CD14-positive monocyte (primary cell): ENCODE measurements at regions of chr4 and their contacts with region 1.

Region 1: DNA sequence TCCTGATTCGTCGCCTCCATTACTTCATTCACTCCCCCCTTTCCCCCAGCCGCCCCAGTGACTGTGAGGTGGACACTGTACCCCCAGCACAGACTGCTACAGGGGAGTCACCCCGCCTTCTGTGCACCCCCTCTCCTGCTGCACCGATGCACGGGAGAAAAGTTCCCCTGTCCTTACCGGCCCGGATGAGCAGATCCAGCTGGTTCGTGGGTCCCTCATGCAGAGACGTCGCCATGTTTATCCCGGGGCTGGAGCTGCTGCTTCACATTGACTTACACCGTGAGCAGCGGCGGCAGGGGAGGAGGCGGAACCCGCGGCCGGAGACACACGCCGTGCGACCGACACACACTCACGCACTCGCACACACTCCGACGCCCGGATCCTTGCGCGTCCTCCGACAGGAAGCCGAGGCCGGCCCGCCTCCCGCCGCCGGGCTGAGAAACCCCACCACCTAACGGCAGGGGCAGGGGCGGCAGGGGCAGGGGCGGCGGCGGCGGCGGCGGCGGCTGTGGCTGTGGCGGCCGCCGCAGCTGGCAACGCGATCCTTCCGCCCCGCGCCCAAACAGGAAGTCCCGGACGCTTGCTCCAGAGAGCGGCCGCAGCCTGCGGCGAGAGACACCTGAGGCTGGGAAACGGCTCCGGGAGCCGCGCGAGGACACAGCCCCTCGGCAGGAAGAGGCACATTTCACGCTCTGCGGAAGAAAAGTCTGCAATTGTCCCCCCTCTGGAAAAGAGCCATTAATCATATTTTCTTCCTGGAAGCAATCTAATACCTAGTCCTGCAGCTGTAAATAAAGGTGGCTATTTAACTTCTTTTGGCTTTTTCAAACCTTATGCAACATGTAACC is 68.6 kb downstream of the NOCT start:
- DNase-seq: peak; percentile 70 to 82 (median 81)
- H3K4me3 ChIP-seq: peak overlapping the region; percentile 69 to 98 (median 84)
- H3K4me3 Mint-ChIP-seq: peak overlapping the region; percentile 98 to 99
- H3K27ac ChIP-seq: peak overlapping the region; percentile 91 to 92
- H3K27ac Mint-ChIP-seq: peak overlapping the region; percentile 96 to 99 (median 99)
- H3K4me1 ChIP-seq: peaks cover 17 to 26% of the 10 kb centered on the region in 2 donors
- H3K4me1 Mint-ChIP-seq: peaks cover 28% of the 10 kb centered on the region
- H3K27me3 ChIP-seq: no peaks in the 10 kb centered on the region
- H3K27me3 Mint-ChIP-seq: peaks cover 0 to 2% (median 1%) of the 10 kb centered on the region in 3 donors
- CTCF ChIP-seq: no peak

Region 2: GRCh38 chr4:138512756-138513155 is 571.4 kb before region 1 on chr4:
- intact Hi-C with region 1: no loop called
- DNase-seq: no peak
- H3K4me3 ChIP-seq: no peak overlapping the region
- H3K4me3 Mint-ChIP-seq: no peak overlapping the region
- H3K27ac ChIP-seq: no peak overlapping the region
- H3K27ac Mint-ChIP-seq: no peak overlapping the region
- H3K4me1 ChIP-seq: no peaks in the 10 kb centered on the region
- H3K4me1 Mint-ChIP-seq: no peaks in the 10 kb centered on the region
- H3K27me3 ChIP-seq: peaks cover 0 to 7% of the 10 kb centered on the region in 2 donors
- H3K27me3 Mint-ChIP-seq: peaks cover 2 to 13% (median 6%) of the 10 kb centered on the region in 3 donors
- CTCF ChIP-seq: no peak

Region 3: DNA sequence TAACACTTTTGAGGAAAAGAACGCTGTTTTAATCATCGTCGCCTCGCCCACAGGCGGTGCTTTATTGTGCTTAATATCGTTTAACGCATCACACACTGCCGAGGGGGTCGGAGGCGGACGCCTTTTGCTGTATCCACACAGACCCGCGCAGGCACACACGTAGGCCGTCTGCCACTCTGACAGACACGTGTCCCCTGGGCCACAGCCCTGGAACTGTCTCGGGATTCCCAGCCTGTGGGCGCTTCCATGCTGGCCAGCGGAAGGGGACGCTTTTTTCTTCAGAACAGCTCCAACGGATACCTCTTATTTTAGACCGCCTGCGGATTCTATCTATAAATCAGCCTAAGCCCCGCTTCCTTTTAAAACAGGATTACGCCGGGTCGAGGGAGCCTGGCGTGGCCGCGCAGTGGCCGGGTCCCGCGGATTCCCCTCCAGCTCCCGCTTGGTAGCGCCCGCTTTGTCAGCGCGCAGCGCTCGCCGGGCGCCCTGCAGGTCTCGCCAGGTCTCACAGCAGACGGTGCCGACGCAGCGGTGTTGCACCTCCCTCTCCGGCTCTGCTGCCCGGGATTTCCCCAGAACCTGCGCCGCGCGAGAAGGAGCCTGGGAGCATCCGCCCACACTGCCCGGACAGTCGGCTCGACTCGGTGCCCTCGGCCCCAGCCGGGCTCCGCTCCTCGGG is 68.8 kb before region 1 on chr4 and contains the start of gene NOCT:
- intact Hi-C with region 1: loop called (anchors 5 kb)
- DNase-seq: peak; percentile 88 to 95 (median 91)
- H3K4me3 ChIP-seq: peak within 1 kb of the TSS; percentile 67 to 86 (median 86)
- H3K4me3 Mint-ChIP-seq: peak within 1 kb of the TSS; percentile 95
- H3K27ac ChIP-seq: peak within 1 kb of the TSS; percentile 83 to 92
- H3K27ac Mint-ChIP-seq: peak within 1 kb of the TSS; percentile 98 to 99 (median 99)
- H3K4me1 ChIP-seq: peaks cover 48 to 63% of the 10 kb centered on the region in 2 donors
- H3K4me1 Mint-ChIP-seq: peaks cover 52% of the 10 kb centered on the region
- H3K27me3 ChIP-seq: no peaks in the 10 kb centered on the region
- H3K27me3 Mint-ChIP-seq: peaks cover 0 to 3% (median 0%) of the 10 kb centered on the region in 3 donors
- CTCF ChIP-seq: peak; percentile 13
- polyA plus RNA-seq, gene NOCT: 0.54 to 31.5 (median 0.89) TPM

Region 4: DNA sequence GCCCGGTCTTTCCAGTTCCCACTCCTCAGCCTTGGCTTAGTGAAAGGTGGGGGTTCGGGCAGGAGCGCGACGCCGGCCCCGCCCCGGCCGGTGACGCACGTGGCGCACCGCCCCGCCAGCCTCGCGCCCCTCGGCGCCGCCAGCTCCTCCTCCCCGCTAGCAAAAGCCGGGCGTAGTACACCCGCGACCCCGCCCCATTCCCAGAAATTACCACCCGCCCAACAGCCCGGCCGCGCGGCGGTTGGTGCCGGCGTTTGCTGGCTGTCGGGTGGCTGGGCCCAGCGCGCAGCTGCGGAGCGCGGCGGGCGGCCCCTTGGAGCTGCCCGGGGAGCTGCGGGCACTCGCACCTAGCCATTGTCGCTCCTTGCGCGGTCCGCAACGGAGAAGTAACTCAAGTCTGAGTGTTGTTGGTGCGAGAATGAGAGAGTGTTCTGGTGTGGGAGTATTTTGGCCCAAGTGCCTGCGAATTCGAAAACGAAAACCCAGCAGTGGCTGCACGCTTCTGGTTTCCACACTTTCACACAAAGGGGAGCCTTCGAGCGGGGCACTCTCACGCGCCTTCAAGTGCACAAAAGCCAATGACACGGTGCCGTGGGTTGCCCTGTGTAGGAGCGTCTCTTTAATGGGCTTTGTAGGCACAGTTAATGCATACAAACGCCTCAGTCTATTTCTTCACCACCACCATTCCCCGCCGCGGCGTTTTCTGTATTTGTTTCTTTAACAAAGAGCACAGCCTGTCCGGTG is 93.9 kb after region 1 on chr4:
- intact Hi-C with region 1: loop called in 1 of 2 experiments (anchors 10 kb)
- DNase-seq: peak; percentile 88 to 93 (median 88)
- H3K4me3 ChIP-seq: peak overlapping the region; percentile 83 to 97 (median 96)
- H3K4me3 Mint-ChIP-seq: peak overlapping the region; percentile 90 to 94
- H3K27ac ChIP-seq: peak overlapping the region; percentile 96 to 97
- H3K27ac Mint-ChIP-seq: peak overlapping the region; percentile 93 to 99 (median 96)
- H3K4me1 ChIP-seq: peaks cover 15 to 29% of the 10 kb centered on the region in 2 donors
- H3K4me1 Mint-ChIP-seq: peaks cover 28% of the 10 kb centered on the region
- H3K27me3 ChIP-seq: no peaks in the 10 kb centered on the region
- H3K27me3 Mint-ChIP-seq: peaks cover 0 to 2% (median 1%) of the 10 kb centered on the region in 3 donors
- CTCF ChIP-seq: no peak

Region 5: DNA sequence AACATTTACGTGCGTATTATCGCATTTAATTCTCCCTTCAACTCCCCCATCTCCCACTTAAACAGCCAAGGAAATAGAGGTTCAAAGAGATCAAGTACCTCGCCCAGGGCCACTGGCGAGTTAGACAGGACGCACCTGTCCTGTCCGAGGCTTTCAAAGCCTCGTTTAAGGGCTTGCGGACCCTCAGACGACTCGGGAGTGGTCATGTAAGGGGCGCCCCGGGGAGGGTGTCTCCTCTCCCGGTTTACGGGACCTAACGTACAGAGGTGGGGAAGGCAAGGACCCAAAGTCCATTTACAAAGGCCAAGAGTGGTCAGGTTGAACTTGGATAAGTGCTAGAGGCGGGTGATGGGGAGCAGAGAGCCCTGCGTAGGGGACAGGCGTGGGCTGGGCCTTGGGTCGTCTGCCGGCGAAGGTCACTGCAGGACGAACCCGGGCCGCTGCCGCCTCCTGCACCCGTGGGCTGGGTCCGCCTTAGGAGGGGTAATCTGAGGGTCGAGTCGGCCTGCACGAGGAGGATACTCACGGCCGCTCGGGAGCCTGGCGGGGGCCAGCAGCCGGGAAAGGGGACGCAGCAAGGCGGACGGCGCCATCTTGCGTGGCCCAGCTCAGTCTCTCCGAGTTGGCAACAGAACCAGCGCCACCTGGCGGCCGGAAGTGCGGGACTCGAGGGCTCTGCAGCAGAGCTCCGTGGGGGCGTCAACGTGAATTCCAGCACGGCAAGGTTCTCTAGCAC is 211.2 kb after region 1 on chr4:
- intact Hi-C with region 1: loop called in 1 of 2 experiments (anchors 10 kb)
- DNase-seq: peak; percentile 90 to 93 (median 92)
- H3K4me3 ChIP-seq: peak overlapping the region; percentile 88 to 95 (median 91)
- H3K4me3 Mint-ChIP-seq: peak overlapping the region; percentile 96 to 98
- H3K27ac ChIP-seq: peak overlapping the region; percentile 63 to 92
- H3K27ac Mint-ChIP-seq: peak overlapping the region; percentile 90 to 98 (median 96)
- H3K4me1 ChIP-seq: peaks cover 19 to 34% of the 10 kb centered on the region in 2 donors
- H3K4me1 Mint-ChIP-seq: peaks cover 26% of the 10 kb centered on the region
- H3K27me3 ChIP-seq: no peaks in the 10 kb centered on the region
- H3K27me3 Mint-ChIP-seq: peaks cover 0 to 1% (median 0%) of the 10 kb centered on the region in 3 donors
- CTCF ChIP-seq: peak; percentile 86

Region 6: GRCh38 chr4:139410312-139410711 is 326.1 kb after region 1 on chr4:
- intact Hi-C with region 1: no loop called
- DNase-seq: no peak
- H3K4me3 ChIP-seq: no peak overlapping the region
- H3K4me3 Mint-ChIP-seq: no peak overlapping the region
- H3K27ac ChIP-seq: no peak overlapping the region
- H3K27ac Mint-ChIP-seq: peak overlapping the region in 2 of 7 donors; percentile 11
- H3K4me1 ChIP-seq: peaks cover 0 to 5% of the 10 kb centered on the region in 2 donors
- H3K4me1 Mint-ChIP-seq: peaks cover 11% of the 10 kb centered on the region
- H3K27me3 ChIP-seq: no peaks in the 10 kb centered on the region
- H3K27me3 Mint-ChIP-seq: no peaks in the 10 kb centered on the region
- CTCF ChIP-seq: no peak

Region 7: DNA sequence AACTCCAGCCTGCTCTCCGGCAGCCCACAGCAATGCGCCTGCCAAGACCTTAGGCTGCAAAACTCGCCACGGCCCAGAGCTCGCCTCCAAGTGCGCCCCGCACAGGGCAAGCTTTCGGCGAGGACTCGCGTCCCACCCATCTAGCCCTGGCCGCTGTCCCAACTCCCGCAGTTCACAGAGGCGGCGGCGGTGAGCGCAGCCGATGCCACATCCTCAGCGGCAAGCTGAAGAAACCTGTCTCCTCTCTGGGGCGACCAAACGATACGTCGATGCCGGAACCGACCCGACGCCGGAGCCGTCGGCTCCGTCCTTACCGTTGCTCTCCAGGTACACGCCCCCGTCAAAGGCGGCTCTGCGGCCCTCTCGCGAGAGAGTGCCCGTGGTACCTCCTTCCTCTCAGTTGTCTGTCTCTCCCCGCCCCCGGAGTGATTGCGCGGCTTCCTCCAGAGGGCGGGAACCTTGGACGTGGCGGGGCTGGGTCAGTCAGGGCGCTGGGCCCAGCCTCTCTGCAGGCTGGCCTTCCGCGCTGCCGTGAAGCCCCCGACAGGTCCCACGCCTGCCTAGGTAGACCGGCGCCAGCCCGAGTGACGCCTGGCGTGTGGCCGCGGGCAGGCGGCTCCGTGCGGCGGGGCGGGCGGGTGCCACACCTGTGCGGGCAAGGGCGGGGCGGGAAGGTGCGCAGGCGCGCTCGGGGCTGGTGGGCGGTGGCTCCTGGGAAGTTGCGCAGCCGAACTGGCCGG is 369.4 kb after region 1 on chr4:
- intact Hi-C with region 1: loop called in 1 of 2 experiments (anchors 10 kb)
- DNase-seq: peak; percentile 93 to 97 (median 94)
- H3K4me3 ChIP-seq: peak overlapping the region; percentile 74 to 98 (median 94)
- H3K4me3 Mint-ChIP-seq: peak overlapping the region; percentile 96 to 98
- H3K27ac ChIP-seq: peak overlapping the region; percentile 94 to 95
- H3K27ac Mint-ChIP-seq: peak overlapping the region; percentile 95 to 99 (median 98)
- H3K4me1 ChIP-seq: peaks cover 30 to 48% of the 10 kb centered on the region in 2 donors
- H3K4me1 Mint-ChIP-seq: peaks cover 61% of the 10 kb centered on the region
- H3K27me3 ChIP-seq: no peaks in the 10 kb centered on the region
- H3K27me3 Mint-ChIP-seq: peaks cover 0 to 1% (median 0%) of the 10 kb centered on the region in 3 donors
- CTCF ChIP-seq: peak; percentile 30